T-cell (primary cell): ENCODE measurements at regions of chr2 and their contacts with region 1.

Region 1: GRCh38 chr2:235893129-235893698 is 275.0 kb downstream of the GBX2 start:
- DNase-seq: no peak
- ATAC-seq: no peak
- H3K4me3 ChIP-seq: no peak overlapping the region
- H3K4me3 Mint-ChIP-seq: no peak overlapping the region
- H3K27ac ChIP-seq: no peak overlapping the region
- H3K27ac Mint-ChIP-seq: no peak overlapping the region
- H3K4me1 ChIP-seq: no peaks in the 10 kb centered on the region
- H3K4me1 Mint-ChIP-seq: no peaks in the 10 kb centered on the region
- H3K27me3 ChIP-seq: no peaks in the 10 kb centered on the region
- H3K27me3 Mint-ChIP-seq: peaks cover 0 to 2% of the 10 kb centered on the region in 2 donors

Region 2: GRCh38 chr2:235643680-235644511 is 249.3 kb before region 1 on chr2:
- CTCF ChIA-PET with region 1: no interaction called
- POLR2A ChIA-PET with region 1: interaction called in 1 of 2 experiments, 12 read pairs
- DNase-seq: no peak
- ATAC-seq: no peak
- H3K4me3 ChIP-seq: no peak overlapping the region
- H3K4me3 Mint-ChIP-seq: no peak overlapping the region
- H3K27ac ChIP-seq: no peak overlapping the region
- H3K27ac Mint-ChIP-seq: no peak overlapping the region
- H3K4me1 ChIP-seq: peaks cover 0 to 4% of the 10 kb centered on the region in 2 experiments
- H3K4me1 Mint-ChIP-seq: peaks cover 0 to 4% (median 0%) of the 10 kb centered on the region in 3 donors
- H3K27me3 ChIP-seq: peaks cover 0 to 17% of the 10 kb centered on the region in 2 experiments
- H3K27me3 Mint-ChIP-seq: peaks cover 24 to 26% of the 10 kb centered on the region in 2 donors

Region 3: GRCh38 chr2:235859651-235860050 is 33.6 kb before region 1 on chr2:
- CTCF ChIA-PET with region 1: no interaction called
- POLR2A ChIA-PET with region 1: no interaction called
- DNase-seq: no peak
- ATAC-seq: no peak
- H3K4me3 ChIP-seq: no peak overlapping the region
- H3K4me3 Mint-ChIP-seq: no peak overlapping the region
- H3K27ac ChIP-seq: no peak overlapping the region
- H3K27ac Mint-ChIP-seq: no peak overlapping the region
- H3K4me1 ChIP-seq: no peaks in the 10 kb centered on the region
- H3K4me1 Mint-ChIP-seq: no peaks in the 10 kb centered on the region
- H3K27me3 ChIP-seq: peaks cover 3% of the 10 kb centered on the region in 2 experiments
- H3K27me3 Mint-ChIP-seq: peaks cover 19 to 20% of the 10 kb centered on the region in 2 donors

Region 4: GRCh38 chr2:235908826-235909225 is 15.6 kb after region 1 on chr2:
- CTCF ChIA-PET with region 1: no interaction called
- POLR2A ChIA-PET with region 1: no interaction called
- DNase-seq: no peak
- ATAC-seq: no peak
- H3K4me3 ChIP-seq: no peak overlapping the region
- H3K4me3 Mint-ChIP-seq: no peak overlapping the region
- H3K27ac ChIP-seq: no peak overlapping the region
- H3K27ac Mint-ChIP-seq: no peak overlapping the region
- H3K4me1 ChIP-seq: no peaks in the 10 kb centered on the region
- H3K4me1 Mint-ChIP-seq: no peaks in the 10 kb centered on the region
- H3K27me3 ChIP-seq: peaks cover 0 to 11% of the 10 kb centered on the region in 2 experiments
- H3K27me3 Mint-ChIP-seq: peaks cover 15 to 21% of the 10 kb centered on the region in 2 donors